ENCODE measurements at regions of chr6 and their contacts with region 1.

Region 1: DNA sequence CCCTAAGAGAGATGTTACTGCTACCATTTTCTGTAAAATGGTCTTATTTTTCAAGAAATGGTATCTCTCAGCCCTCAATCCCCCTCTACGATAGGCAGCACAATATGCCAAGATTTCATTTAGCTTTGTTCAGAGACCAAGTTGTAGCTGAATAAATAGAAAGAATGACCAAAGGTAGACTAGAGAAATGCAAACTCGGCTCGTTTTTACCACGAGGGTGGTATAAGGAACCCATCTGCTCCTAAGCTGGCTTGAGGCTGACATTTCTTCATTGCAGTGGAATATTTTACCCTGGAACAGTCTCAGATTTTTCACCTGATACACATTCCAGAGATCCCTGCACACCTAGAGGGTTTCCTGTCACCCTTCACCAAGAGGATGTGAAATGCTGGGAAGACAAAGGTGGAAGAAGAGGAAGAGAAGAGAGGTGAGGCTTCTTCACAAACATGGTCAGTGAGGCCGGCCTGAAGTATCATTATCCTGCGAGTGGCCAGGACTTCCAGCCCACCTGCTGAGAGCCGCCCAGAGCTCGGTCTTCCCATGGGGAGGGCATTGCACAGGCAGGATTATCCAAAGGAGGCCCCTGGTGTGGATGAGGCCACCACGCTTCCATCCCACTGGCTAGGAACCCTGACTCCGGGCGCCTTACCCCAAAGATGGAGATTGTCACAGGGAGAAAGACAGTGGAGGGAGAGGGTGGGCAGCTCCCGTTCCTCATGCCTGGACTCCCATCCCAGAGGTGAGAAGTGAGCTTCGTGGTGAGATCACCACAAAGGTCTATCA is 57.1 kb upstream of the AFDN start:
- DNase-seq: no peak
- H3K4me3 ChIP-seq: no peak overlapping the region
- CTCF ChIP-seq: no peak

Region 2: DNA sequence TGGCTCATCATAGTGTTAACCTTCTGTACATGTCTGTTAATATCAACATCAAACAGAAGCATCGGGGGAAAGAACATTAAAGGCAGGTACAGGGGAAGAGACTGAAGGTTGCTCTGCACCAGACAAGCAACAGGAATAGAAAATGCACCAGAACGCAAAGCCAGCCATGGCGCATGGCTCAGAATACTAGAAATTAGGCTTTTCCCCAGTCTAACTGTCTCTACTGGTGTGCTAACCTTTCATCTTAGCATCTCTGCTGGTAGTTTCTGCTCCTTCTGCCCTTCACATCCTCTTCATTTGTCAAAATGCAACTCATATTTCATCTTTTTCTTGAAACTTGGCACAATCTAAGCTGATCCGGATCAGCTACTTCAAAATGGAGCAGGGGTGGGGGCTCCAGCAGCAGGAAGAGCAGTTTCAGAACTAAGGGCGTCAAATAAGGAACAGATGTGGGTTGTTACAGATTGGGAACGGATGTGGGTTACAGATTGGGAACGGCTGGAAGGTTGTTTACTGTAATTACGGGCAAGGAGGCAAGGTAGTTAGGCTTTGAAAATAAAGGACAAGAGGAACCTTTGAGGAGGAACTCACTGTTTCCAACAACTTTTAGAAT is 800.1 kb before region 1 on chr6:
- in situ Hi-C with region 1: no loop called
- DNase-seq: no peak
- H3K4me3 ChIP-seq: no peak overlapping the region
- CTCF ChIP-seq: no peak

Region 3: GRCh38 chr6:167722634-167723309 is 46.8 kb before region 1 on chr6:
- in situ Hi-C with region 1: loop called (anchors 5 kb)
- DNase-seq: no peak
- H3K4me3 ChIP-seq: no peak overlapping the region
- CTCF ChIP-seq: no peak